Posterior cingulate gyrus (tissue), 11 donors: ENCODE measurements at regions of chr3 and their contacts with region 1.

Region 1: GRCh38 chr3:24773798-24774197 is 279.1 kb upstream of the THRB start:
- DNase-seq: peak; percentile 11 to 93 (median 64)

Region 2: DNA sequence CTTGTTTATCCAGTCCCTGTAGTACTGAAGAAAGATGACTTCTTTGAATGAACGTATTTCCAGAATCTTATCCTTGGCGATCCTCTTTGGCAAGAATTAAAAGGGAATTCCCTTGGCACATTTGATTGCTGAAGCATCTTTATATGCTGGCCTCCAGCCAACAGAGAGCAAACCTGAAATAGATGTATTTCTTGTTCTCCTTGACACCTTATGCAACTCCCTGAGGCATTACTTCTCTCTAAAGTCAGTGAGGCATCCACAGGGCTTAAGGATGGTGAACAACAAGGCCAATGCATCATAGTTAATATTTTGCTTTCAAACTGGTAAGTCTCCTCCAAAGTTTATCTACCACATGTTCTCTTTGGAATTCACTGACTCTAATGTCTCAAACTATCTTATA is 171.8 kb after region 1 on chr3:
- intact Hi-C with region 1: no loop called
- DNase-seq: no peak

Region 3: DNA sequence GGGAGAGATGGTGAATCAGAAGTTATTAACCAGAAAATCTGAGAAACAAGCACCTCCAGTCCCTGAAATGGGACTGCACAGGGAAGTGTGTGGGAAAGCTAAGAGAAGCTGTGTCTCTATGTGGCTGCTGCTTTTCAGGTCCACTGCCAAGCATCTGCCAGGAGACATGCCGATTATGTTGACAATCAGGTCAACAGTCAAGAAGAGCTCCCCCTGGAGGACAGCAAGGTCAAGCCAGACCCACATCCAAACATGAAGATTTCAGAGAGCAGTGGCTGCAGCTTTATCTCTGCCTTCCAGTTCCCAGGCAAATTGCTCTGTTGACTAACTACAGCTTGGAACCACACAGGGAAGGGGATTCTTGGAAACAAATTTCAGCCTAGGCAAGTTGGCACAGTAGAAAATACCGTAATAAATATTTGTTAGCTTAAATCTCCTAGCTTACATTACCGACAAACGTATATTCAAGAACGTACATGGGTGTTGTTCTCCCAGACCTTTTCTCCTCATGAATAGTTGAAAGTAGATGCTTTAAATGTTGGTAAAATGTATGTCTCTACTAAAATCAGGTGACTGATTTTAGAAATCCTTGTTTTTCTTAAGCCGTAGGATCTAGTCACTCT is 259.7 kb after region 1 on chr3:
- intact Hi-C with region 1: loop called (anchors 10 kb)
- DNase-seq: peak in 6 of 10 donors; percentile 11 to 75 (median 36)

Region 4: GRCh38 chr3:26236526-26236925 is 1462.7 kb after region 1 on chr3:
- intact Hi-C with region 1: no loop called
- DNase-seq: no peak